ENCODE measurements at regions of chr3 and their contacts with region 1.

Region 1: DNA sequence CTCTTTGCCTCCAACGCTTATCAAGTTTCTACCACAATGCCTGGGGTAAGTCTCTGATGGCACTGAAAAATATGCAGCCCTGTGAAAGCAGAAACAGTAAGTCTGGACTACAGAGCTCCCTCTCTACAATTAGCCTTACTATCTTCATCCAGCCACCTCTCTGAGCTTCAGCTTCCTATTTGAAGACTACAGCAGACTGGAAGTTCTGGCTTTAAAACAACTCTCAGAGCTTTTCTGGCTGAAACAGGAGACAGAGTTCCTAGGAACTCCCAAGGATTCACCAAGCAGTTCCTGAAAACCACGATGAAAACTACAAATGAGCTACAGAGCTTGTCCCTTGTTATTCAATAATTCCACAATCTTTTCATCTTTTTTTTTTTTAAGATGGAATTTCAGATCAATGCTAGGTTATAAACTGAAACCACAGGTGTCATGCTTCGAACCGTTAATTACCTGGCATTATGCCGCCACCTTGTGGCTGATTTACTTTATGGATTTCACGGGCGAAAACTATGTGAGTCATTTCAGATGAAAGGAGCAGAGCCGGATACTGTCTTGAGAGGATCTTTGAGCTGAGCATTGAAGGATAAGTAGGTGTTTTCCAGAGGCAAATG is 3.9 kb downstream of the CRYGS start:
- DNase-seq: peak; percentile 52
- CTCF ChIP-seq: peak; percentile 70

Region 2: GRCh38 chr3:185983495-185984141 is 556.7 kb before region 1 on chr3:
- CTCF ChIA-PET with region 1: interaction called, 103 read pairs
- POLR2A ChIA-PET with region 1: no interaction called
- DNase-seq: peak; percentile 81
- CTCF ChIP-seq: peak; percentile 89

Region 3: GRCh38 chr3:186281176-186281575 is 259.2 kb before region 1 on chr3:
- CTCF ChIA-PET with region 1: interaction called, 11 read pairs
- POLR2A ChIA-PET with region 1: no interaction called
- DNase-seq: no peak
- CTCF ChIP-seq: no peak

Region 4: GRCh38 chr3:186425788-186426730 is 114.3 kb before region 1 on chr3:
- CTCF ChIA-PET with region 1: interaction called, 10 read pairs
- POLR2A ChIA-PET with region 1: no interaction called
- DNase-seq: no peak
- CTCF ChIP-seq: no peak

Region 5: GRCh38 chr3:186520957-186521842 is 19.1 kb before region 1 on chr3:
- CTCF ChIA-PET with region 1: interaction called, 110 read pairs
- POLR2A ChIA-PET with region 1: interaction called, 10 read pairs
- DNase-seq: peak; percentile 59
- CTCF ChIP-seq: no peak

Region 6: DNA sequence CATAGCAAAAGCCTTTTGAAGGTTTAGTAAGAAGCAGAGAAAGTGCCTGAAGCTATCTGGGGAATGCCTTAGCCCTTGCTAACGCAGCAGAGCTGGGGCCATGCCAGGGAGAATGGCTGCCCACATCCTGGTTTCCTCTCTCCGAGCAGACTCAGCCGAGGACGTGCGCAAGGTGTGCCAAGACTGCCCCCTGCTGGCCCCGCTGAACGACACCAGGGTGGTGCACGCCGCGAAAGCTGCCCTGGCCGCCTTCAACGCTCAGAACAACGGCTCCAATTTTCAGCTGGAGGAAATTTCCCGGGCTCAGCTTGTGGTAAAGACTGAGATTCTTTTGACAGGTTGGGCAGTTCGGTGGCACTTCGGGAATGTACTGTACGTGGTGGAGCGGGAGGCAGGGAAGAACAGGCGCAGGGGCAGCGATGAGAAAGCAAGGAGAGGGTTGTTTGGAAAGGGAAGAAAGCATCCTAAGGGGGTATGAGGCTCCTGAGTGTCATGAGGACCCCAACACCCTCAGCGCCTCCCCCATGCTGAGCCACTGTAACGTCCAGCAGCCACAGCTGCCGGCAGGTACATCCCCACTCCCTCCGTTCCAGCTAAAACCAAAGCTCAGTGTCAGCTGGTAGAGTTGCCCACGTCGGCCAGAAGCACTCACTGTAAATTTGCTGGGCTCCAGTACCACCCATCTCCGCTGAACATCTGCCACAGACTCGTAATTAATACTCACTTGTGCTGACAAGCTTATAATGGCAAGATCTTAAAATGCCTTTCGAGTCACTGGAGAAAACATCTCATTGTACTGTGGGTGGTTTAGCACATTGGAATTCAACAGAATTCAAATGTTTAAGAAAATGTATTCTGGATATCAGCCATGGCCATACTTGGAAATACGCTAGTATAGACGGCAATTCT is 77.0 kb after region 1 on chr3:
- CTCF ChIA-PET with region 1: interaction called, 22 read pairs
- POLR2A ChIA-PET with region 1: no interaction called
- DNase-seq: peak; percentile 91
- CTCF ChIP-seq: peak; percentile 95